ENCODE measurements at regions of chr10 and their contacts with region 1.

Region 1: GRCh38 chr10:102713814-102714620 is at the start of gene ARL3:
- DNase-seq: peak; percentile 82 to 97
- ATAC-seq: peak; percentile 92 to 98 (median 94)
- H3K4me3 ChIP-seq: peak within 1 kb of the TSS; percentile 99
- H3K4me3 Mint-ChIP-seq: peak within 1 kb of the TSS; percentile 82
- H3K27ac ChIP-seq: peak within 1 kb of the TSS; percentile 89
- H3K27ac Mint-ChIP-seq: peak within 1 kb of the TSS; percentile 79 to 96
- H3K4me1 ChIP-seq: peaks cover 15% of the 10 kb centered on the region
- H3K4me1 Mint-ChIP-seq: peaks cover 17 to 34% of the 10 kb centered on the region in 2 donors
- H3K27me3 ChIP-seq: no peaks in the 10 kb centered on the region
- H3K27me3 Mint-ChIP-seq: no peaks in the 10 kb centered on the region
- CTCF ChIP-seq: peak; percentile 67
- total RNA-seq, gene ARL3: 1.4 to 1.7 (median 1.5) TPM

Region 2: GRCh38 chr10:102200751-102201640 is 513.0 kb before region 1 on chr10:
- intact Hi-C with region 1: no loop called
- DNase-seq: no peak
- ATAC-seq: no peak
- H3K4me3 ChIP-seq: no peak overlapping the region
- H3K4me3 Mint-ChIP-seq: no peak overlapping the region
- H3K27ac ChIP-seq: no peak overlapping the region
- H3K27ac Mint-ChIP-seq: no peak overlapping the region
- H3K4me1 ChIP-seq: no peaks in the 10 kb centered on the region
- H3K4me1 Mint-ChIP-seq: no peaks in the 10 kb centered on the region
- H3K27me3 ChIP-seq: no peaks in the 10 kb centered on the region
- H3K27me3 Mint-ChIP-seq: peaks cover 2 to 9% of the 10 kb centered on the region in 2 donors
- CTCF ChIP-seq: no peak

Region 3: DNA sequence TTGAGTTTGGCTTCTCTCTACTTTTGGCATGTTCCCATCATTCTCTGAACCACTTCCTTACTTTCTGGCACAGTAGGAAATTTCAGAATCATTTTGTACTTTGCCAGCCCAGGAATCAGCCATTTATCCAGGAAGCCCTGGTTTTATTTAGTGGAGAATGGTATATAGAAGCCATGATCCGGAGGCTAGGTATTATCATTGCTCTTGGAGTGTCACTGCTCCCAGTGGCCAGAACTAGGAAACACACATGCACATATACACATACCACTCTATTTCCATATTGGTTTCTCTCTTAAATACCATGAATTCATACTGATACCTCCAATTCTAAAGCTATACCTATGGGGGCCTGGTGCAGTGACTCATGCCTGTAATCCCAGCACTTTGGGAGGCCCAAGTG is 174.0 kb before region 1 on chr10:
- intact Hi-C with region 1: no loop called
- DNase-seq: peak in 1 of 2 donors; percentile 9
- ATAC-seq: no peak
- H3K4me3 ChIP-seq: no peak overlapping the region
- H3K4me3 Mint-ChIP-seq: no peak overlapping the region
- H3K27ac ChIP-seq: no peak overlapping the region
- H3K27ac Mint-ChIP-seq: no peak overlapping the region
- H3K4me1 ChIP-seq: no peaks in the 10 kb centered on the region
- H3K4me1 Mint-ChIP-seq: peaks cover 0 to 3% of the 10 kb centered on the region in 2 donors
- H3K27me3 ChIP-seq: no peaks in the 10 kb centered on the region
- H3K27me3 Mint-ChIP-seq: no peaks in the 10 kb centered on the region
- CTCF ChIP-seq: no peak

Region 4: GRCh38 chr10:102660888-102661657 is 52.9 kb before region 1 on chr10:
- intact Hi-C with region 1: loop called (anchors 5 kb)
- DNase-seq: peak; percentile 57 to 76
- ATAC-seq: peak; percentile 86 to 92 (median 88)
- H3K4me3 ChIP-seq: peak overlapping the region; percentile 10
- H3K4me3 Mint-ChIP-seq: peak overlapping the region; percentile 75
- H3K27ac ChIP-seq: peak overlapping the region; percentile 65
- H3K27ac Mint-ChIP-seq: peak overlapping the region; percentile 74 to 89
- H3K4me1 ChIP-seq: peaks cover 39% of the 10 kb centered on the region
- H3K4me1 Mint-ChIP-seq: peaks cover 11 to 35% of the 10 kb centered on the region in 2 donors
- H3K27me3 ChIP-seq: no peaks in the 10 kb centered on the region
- H3K27me3 Mint-ChIP-seq: no peaks in the 10 kb centered on the region
- CTCF ChIP-seq: no peak

Region 5: GRCh38 chr10:102743588-102744373 is 29.8 kb after region 1 on chr10 and contains the start of gene WBP1L:
- intact Hi-C with region 1: loop called (anchors 1 kb)
- DNase-seq: peak; percentile 92 to 99
- ATAC-seq: peak; percentile 96 to 99 (median 97)
- H3K4me3 ChIP-seq: peak within 1 kb of the TSS; percentile 85
- H3K4me3 Mint-ChIP-seq: peak within 1 kb of the TSS; percentile 93
- H3K27ac ChIP-seq: peak within 1 kb of the TSS; percentile 71
- H3K27ac Mint-ChIP-seq: peak within 1 kb of the TSS; percentile 78 to 86
- H3K4me1 ChIP-seq: peaks cover 16% of the 10 kb centered on the region
- H3K4me1 Mint-ChIP-seq: peaks cover 50 to 53% of the 10 kb centered on the region in 2 donors
- H3K27me3 ChIP-seq: no peaks in the 10 kb centered on the region
- H3K27me3 Mint-ChIP-seq: no peaks in the 10 kb centered on the region
- CTCF ChIP-seq: no peak
- total RNA-seq, gene WBP1L: 34.6 to 48.4 (median 47.9) TPM

Measured in natural killer cell (primary cell).